ENCODE measurements at regions of chr2 and their contacts with region 1.

Region 1: DNA sequence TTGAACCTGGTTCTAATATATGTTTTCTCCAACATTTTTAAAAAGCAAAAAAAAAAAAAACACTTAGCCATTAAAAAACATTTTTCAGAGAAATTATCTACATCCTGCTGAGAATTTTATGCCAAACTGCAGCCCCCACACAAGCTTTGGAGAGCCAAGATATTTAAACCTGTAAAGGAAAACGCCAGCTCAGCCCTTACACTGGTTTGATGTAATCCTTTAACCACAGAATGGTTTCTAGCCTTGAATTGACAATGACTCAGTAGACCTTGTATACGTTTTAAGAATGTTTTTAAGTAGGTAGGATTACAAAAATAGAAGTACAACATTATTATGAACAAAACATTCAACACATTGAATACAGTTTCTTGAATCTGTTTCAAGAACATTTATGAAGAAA is 113.6 kb downstream of the BABAM2 start:
- DNase-seq: peak; percentile 38
- H3K4me3 Mint-ChIP-seq: no peak overlapping the region
- H3K27ac Mint-ChIP-seq: no peak overlapping the region
- H3K4me1 Mint-ChIP-seq: peaks cover 20% of the 10 kb centered on the region
- H3K27me3 Mint-ChIP-seq: no peaks in the 10 kb centered on the region

Region 2: GRCh38 chr2:27984153-27984552 is 19.9 kb before region 1 on chr2:
- CTCF ChIA-PET with region 1: no interaction called
- intact Hi-C with region 1: loop called (anchors 1 kb)
- DNase-seq: no peak
- H3K4me3 Mint-ChIP-seq: no peak overlapping the region
- H3K27ac Mint-ChIP-seq: no peak overlapping the region
- H3K4me1 Mint-ChIP-seq: peaks cover 29% of the 10 kb centered on the region
- H3K27me3 Mint-ChIP-seq: no peaks in the 10 kb centered on the region